H1 (cell line): ENCODE measurements at regions of chr21 and their contacts with region 1.

Region 1: GRCh38 chr21:31786164-31786920 is 54.4 kb upstream of the SCAF4 start:
- DNase-seq: no peak
- H3K4me3 ChIP-seq: no peak overlapping the region
- H3K27ac ChIP-seq: no peak overlapping the region
- H3K4me1 ChIP-seq: no peaks in the 10 kb centered on the region
- H3K27me3 ChIP-seq: no peaks in the 10 kb centered on the region
- CTCF ChIP-seq: no peak
- EP300 ChIP-seq: no peak
- POLR2A ChIP-seq: no peak
- RAD21 ChIP-seq: no peak

Region 2: GRCh38 chr21:31713973-31714740 is 72.2 kb before region 1 on chr21:
- CTCF ChIA-PET with region 1: no interaction called
- POLR2A ChIA-PET with region 1: no interaction called
- DNase-seq: no peak
- H3K4me3 ChIP-seq: no peak overlapping the region
- H3K27ac ChIP-seq: no peak overlapping the region
- H3K4me1 ChIP-seq: peaks cover 0 to 17% (median 5%) of the 10 kb centered on the region in 4 experiments; a peak in 3 of 7 replicates
- H3K27me3 ChIP-seq: no peaks in the 10 kb centered on the region
- CTCF ChIP-seq: no peak
- EP300 ChIP-seq: no peak
- POLR2A ChIP-seq: no peak
- RAD21 ChIP-seq: no peak

Region 3: GRCh38 chr21:31753949-31754707 is 32.2 kb before region 1 on chr21:
- CTCF ChIA-PET with region 1: no interaction called
- POLR2A ChIA-PET with region 1: no interaction called
- DNase-seq: peak in 1 of 2 experiments; percentile 23
- H3K4me3 ChIP-seq: peak overlapping the region in 1 of 4 experiments; percentile 37; a peak in 1 of 8 replicates
- H3K27ac ChIP-seq: no peak overlapping the region
- H3K4me1 ChIP-seq: peaks cover 0 to 8% (median 5%) of the 10 kb centered on the region in 4 experiments; a peak in 3 of 7 replicates
- H3K27me3 ChIP-seq: no peaks in the 10 kb centered on the region
- CTCF ChIP-seq: no peak
- EP300 ChIP-seq: no peak
- POLR2A ChIP-seq: no peak
- RAD21 ChIP-seq: no peak

Region 4: DNA sequence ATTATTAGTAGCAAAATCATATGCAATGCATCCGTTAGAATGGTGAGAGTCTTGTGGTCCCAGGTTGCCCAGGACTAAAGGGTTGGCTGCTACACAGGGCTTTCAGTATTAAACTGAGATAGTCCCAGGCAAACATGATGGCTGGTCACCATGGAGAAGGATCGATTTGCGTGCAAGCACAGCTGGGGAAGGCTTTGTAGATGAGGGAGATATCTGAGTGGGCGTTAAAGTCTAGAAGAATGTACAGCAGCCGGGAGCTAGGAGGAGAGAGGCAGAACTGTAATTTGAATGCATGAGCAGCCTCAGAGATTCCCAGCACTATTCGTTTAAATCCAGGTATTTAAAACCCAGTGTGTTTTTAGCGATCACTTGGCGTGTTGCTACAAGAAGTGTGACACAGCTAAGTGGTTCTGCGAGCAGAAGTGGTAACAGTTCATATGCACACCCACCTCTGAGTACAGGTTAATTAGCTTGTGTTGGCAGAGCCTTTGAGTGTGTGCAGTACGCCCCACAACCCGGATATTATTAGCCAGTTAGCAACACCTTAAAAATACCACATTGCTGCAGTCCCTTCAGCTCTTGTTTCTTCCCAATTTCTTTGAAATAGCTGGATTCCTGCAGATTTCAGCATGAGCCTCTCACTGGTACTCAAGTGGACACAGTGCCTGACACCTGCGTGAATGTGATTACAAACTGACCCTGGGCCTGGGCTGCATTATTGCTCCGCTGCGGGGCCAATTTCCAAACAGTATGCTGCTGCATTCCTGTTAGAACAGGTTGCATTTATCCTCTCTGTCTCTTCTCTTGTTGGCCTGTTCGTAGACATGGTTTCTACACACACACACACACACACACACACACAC is 12.7 kb after region 1 on chr21:
- CTCF ChIA-PET with region 1: interaction called, 16 read pairs
- POLR2A ChIA-PET with region 1: no interaction called
- DNase-seq: no peak
- H3K4me3 ChIP-seq: no peak overlapping the region
- H3K27ac ChIP-seq: no peak overlapping the region
- H3K4me1 ChIP-seq: peaks cover 0 to 2% (median 0%) of the 10 kb centered on the region in 4 experiments; a peak in 1 of 7 replicates
- H3K27me3 ChIP-seq: no peaks in the 10 kb centered on the region
- CTCF ChIP-seq: no peak
- EP300 ChIP-seq: no peak
- POLR2A ChIP-seq: no peak
- RAD21 ChIP-seq: no peak

Region 5: DNA sequence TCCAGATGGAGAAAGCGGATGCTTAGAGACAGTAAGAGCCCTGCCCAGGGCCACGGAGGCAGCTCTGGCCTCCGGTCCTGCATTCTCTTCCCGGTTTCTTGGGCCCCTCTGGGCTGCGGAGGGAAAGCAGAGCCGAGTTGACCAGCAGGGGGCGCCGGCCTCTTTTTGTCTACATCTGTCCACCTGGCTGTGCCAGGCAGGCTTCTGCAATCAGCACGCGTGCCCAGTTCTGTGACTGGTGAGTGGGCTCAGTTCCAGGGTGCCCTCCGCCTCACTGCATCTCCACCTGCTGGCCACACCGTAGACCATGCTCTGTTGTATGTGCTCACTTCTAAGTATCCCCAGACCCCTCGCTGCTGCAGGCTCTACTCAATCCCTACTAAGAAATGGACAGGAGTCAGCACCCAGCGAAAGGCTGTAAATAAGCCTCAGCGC is 79.8 kb after region 1 on chr21:
- CTCF ChIA-PET with region 1: interaction called, 10 read pairs
- POLR2A ChIA-PET with region 1: no interaction called
- DNase-seq: peak; percentile 82 to 98
- H3K4me3 ChIP-seq: no peak overlapping the region
- H3K27ac ChIP-seq: no peak overlapping the region
- H3K4me1 ChIP-seq: no peaks in the 10 kb centered on the region
- H3K27me3 ChIP-seq: peaks cover 0 to 2% (median 0%) of the 10 kb centered on the region in 4 experiments; a peak in 2 of 7 replicates
- CTCF ChIP-seq: peak; percentile 62 to 95 (median 81)
- EP300 ChIP-seq: no peak
- POLR2A ChIP-seq: no peak
- RAD21 ChIP-seq: peak; percentile 72 to 79

Region 6: DNA sequence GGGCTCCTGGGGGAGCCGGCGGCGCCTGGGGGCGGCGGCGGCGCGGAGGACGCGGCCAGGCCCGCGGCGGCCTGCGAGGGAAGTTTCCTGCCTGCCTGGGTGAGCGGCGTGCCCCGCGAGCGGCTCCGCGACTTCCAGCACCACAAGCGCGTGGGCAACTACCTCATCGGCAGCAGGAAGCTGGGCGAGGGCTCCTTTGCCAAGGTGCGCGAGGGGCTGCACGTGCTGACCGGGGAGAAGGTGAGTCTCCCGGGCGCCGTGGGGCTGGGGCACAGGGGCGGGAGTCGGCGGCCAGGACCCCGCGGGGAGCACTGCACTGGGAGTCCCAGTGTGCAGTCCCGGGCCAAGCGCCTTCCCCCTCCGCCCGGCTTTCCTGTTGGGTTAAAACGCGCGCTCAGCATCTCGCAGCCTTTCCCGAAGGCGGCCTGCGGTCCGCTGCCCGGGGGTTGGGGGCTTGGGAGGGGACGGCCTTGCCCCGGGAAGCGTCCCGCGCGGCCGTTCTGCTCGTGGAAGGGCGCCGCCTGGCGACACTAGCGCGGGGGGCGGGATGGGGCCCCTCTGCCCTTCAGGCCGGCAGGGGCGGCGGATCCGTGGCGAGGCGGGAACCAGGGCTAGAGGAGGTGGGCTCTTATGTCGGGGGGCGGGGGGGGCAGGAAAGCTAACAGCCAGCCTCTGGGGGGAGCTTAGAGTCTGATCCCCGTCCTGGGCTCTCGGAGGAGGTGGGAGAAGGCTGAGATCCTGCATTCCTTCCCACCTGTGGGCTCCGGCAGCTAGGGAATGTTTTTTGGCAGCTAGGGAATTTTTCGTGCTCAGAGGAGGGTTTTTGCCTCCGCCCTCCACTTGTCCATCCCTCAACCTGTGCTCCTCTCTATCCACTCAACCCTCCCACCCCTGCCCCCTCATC is 87.6 kb after region 1 on chr21:
- CTCF ChIA-PET with region 1: interaction called, 13 read pairs
- POLR2A ChIA-PET with region 1: no interaction called
- DNase-seq: peak in 1 of 2 experiments; percentile 89
- H3K4me3 ChIP-seq: peak overlapping the region; percentile 58 to 86 (median 68)
- H3K27ac ChIP-seq: no peak overlapping the region
- H3K4me1 ChIP-seq: peaks cover 4 to 17% (median 7%) of the 10 kb centered on the region in 4 experiments
- H3K27me3 ChIP-seq: peaks cover 0 to 9% (median 7%) of the 10 kb centered on the region in 4 experiments; a peak in 4 of 7 replicates
- CTCF ChIP-seq: peak; percentile 54 to 75 (median 65)
- EP300 ChIP-seq: no peak
- POLR2A ChIP-seq: no peak
- RAD21 ChIP-seq: peak; percentile 32 to 61; a peak in 2 of 4 replicates

Region 7: DNA sequence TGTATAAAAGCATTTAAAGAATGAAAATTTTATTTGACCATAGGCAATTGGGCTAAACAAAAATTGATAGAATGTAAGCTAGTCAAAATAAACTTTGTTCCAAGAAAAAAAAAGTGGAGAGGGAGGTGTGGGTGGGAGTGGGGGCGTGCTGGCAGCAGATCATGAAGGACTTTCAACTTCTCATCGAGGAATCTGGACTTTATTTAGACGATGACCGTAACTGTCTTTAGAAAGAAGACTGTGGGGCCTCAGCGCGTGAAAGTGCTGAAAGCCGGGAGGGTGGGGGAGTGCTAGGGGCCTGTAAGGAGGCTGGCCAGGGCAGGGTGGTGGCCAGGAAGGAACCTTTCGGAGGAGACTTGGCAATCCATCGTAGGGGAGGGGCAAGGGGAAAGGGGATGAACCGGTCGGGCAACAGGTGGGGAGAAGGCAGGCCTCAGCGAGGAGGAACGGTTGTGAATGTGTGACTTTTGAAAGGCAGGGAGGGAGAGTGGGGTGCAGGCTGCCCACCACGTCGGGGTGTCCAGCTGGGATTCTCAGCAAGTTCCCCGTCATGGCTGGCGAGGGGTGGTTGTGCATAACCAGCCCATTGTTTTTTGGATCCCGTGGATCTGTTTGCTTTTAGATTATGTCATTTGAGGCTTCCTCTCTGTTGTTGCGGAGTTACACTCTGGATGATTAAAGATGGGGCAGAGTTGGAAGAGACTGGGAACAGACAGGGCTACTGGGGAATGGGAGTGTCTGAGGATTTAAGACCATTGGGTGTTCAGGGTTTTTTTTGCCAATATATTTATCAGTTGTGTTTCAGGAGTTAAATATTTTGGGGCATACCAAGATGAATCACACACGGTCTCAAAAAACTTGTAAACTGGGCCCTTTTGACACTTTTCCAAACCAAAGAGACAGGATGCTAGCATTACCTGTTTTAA is 122.0 kb after region 1 on chr21:
- CTCF ChIA-PET with region 1: no interaction called
- POLR2A ChIA-PET with region 1: no interaction called
- DNase-seq: peak in 1 of 2 experiments; percentile 72
- H3K4me3 ChIP-seq: peak overlapping the region; percentile 5 to 46 (median 22); a peak in 5 of 8 replicates
- H3K27ac ChIP-seq: no peak overlapping the region; the same call in 1 of the 2 replicates
- H3K4me1 ChIP-seq: peaks cover 12 to 31% (median 22%) of the 10 kb centered on the region in 4 experiments
- H3K27me3 ChIP-seq: no peaks in the 10 kb centered on the region
- CTCF ChIP-seq: no peak
- EP300 ChIP-seq: no peak
- POLR2A ChIP-seq: no peak
- RAD21 ChIP-seq: no peak